Psoas muscle (tissue), 8 donors: ENCODE measurements at regions of chr22 and their contacts with region 1.

Region 1: GRCh38 chr22:49930739-49931412 is 12.4 kb downstream of the CRELD2 start:
- DNase-seq: peak; percentile 60 to 83
- ATAC-seq: peak; percentile 36 to 59 (median 50)
- H3K4me3 ChIP-seq: no peak overlapping the region
- H3K27ac ChIP-seq: peak overlapping the region; percentile 19
- H3K4me1 ChIP-seq: peaks cover 43% of the 10 kb centered on the region
- H3K27me3 ChIP-seq: peaks cover 0 to 5% (median 0%) of the 10 kb centered on the region in 3 donors
- CTCF ChIP-seq: peak; percentile 66

Region 2: GRCh38 chr22:49992921-49993648 is 62.2 kb after region 1 on chr22:
- intact Hi-C with region 1: loop called in 1 of 2 experiments (anchors 1 kb)
- DNase-seq: peak; percentile 63 to 84
- ATAC-seq: peak; percentile 90 to 97 (median 91)
- H3K4me3 ChIP-seq: no peak overlapping the region
- H3K27ac ChIP-seq: no peak overlapping the region
- H3K4me1 ChIP-seq: peaks cover 5% of the 10 kb centered on the region
- H3K27me3 ChIP-seq: no peaks in the 10 kb centered on the region
- CTCF ChIP-seq: peak; percentile 73

Region 3: GRCh38 chr22:50030297-50031188 is 99.7 kb after region 1 on chr22:
- intact Hi-C with region 1: loop called (anchors 1 kb)
- DNase-seq: peak; percentile 76 to 86
- ATAC-seq: peak; percentile 86 to 97 (median 86)
- H3K4me3 ChIP-seq: no peak overlapping the region
- H3K27ac ChIP-seq: no peak overlapping the region
- H3K4me1 ChIP-seq: peaks cover 6% of the 10 kb centered on the region
- H3K27me3 ChIP-seq: peaks cover 0 to 56% (median 16%) of the 10 kb centered on the region in 3 donors
- CTCF ChIP-seq: peak; percentile 91

Region 4: DNA sequence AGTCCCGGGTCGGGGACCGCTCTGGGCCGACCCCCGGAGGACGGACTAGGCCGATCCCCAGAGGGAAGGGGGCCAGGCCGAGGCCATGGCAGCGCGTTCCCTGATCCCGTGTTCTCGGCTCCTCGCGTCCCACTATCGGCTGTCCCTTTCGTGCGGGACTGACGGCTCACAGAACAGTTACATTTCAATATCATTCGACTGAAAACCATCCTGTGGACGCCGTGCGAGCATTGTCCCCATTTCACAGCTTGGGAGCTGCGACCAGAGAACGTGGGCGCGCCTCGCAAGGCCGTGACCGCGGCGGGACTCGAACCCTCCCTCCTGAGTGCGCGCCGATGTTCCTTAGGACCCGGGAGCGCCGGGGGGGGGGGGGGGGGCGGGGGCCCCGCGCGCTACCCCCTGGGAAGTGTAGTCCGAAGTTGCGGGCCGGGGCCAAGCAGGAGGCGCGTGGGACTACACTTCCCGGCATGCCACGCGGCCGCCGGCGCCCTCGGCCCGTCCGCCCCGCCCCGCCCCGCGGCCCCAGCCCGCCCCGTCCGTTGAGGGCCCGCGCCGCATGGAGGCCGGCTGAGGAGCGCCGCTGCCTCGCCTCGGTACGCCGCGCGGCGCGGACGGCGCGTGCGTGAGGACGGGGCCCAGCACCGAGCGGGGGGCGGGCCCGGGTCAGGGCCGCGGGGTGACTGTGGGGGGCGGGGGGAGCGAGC is 254.7 kb after region 1 on chr22 and contains the start of gene TRABD:
- intact Hi-C with region 1: loop called in 1 of 2 experiments (anchors 10 kb)
- DNase-seq: peak; percentile 92 to 95
- ATAC-seq: peak; percentile 84 to 92 (median 90)
- H3K4me3 ChIP-seq: peak within 1 kb of the TSS; percentile 79
- H3K27ac ChIP-seq: peak within 1 kb of the TSS; percentile 60
- H3K4me1 ChIP-seq: peaks cover 26% of the 10 kb centered on the region
- H3K27me3 ChIP-seq: no peaks in the 10 kb centered on the region
- CTCF ChIP-seq: no peak
- total RNA-seq, gene TRABD: 19.9 to 29.5 (median 24.0) TPM

Region 5: DNA sequence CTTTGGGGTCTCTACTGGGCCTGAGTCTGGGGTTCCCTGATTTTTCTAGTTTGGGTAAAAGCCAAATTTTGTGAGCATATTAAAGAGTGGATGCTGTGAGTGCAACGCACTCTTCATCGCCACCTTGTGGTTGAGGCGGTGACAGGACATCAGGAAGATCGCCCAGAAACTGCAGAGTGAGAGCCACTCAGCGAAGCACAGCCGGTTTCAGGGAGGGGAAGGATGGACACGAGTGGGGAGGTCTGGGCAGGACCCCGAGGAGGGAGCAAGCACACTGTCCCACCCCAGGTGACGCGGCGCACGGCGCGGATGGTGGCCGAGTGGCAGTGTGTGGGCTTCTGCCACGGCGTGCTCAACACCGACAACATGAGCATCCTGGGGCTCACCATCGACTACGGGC is 279.0 kb after region 1 on chr22:
- intact Hi-C with region 1: loop called (anchors 5 to 10 kb)
- DNase-seq: peak; percentile 69 to 84
- ATAC-seq: peak; percentile 34 to 60 (median 44)
- H3K4me3 ChIP-seq: no peak overlapping the region
- H3K27ac ChIP-seq: no peak overlapping the region
- H3K4me1 ChIP-seq: peaks cover 23% of the 10 kb centered on the region
- H3K27me3 ChIP-seq: no peaks in the 10 kb centered on the region
- CTCF ChIP-seq: peak; percentile 78